Heart left ventricle (tissue), 16 donors: ENCODE measurements at regions of chr20 and their contacts with region 1.

Region 1: DNA sequence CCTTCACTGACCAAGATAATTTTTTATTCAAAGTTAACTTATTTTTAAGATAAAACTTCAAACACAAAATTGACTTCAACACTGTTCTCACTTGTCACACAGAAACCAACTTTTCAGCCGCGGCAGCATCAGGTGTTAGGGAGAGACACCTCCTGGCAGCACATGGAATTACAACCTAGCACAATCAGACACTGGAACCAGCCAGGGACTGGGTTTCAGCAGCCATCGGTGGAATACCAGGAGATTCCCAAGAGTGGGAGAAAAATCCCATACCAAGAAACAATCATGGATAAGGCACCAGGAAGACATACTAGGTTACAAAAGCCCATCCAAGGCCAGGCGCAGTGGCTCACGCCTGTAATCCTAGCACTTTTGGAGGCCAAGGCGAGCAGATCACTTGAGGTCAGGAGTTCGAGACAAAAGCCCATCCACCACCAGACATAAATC is 70.0 kb downstream of the SNX5 start:
- DNase-seq: peak; percentile 70 to 81 (median 78)
- ATAC-seq: peak in 3 of 4 donors; percentile 36 to 60 (median 51)
- H3K4me3 ChIP-seq: no peak overlapping the region
- H3K27ac ChIP-seq: no peak overlapping the region
- H3K4me1 ChIP-seq: peaks cover 0 to 38% (median 31%) of the 10 kb centered on the region in 12 donors
- H3K27me3 ChIP-seq: no peaks in the 10 kb centered on the region
- CTCF ChIP-seq: peak; percentile 88 to 98 (median 92)
- POLR2A ChIP-seq: no peak

Region 2: GRCh38 chr20:17504898-17505635 is 393.5 kb before region 1 on chr20:
- intact Hi-C with region 1: loop called in 9 of 10 experiments (anchors 2 to 10 kb)
- DNase-seq: peak; percentile 54 to 85 (median 58)
- ATAC-seq: peak; percentile 59 to 87 (median 82)
- H3K4me3 ChIP-seq: peak overlapping the region; percentile 24 to 65 (median 54)
- H3K27ac ChIP-seq: peak overlapping the region in 8 of 12 donors; percentile 5 to 65 (median 32)
- H3K4me1 ChIP-seq: peaks cover 0 to 19% (median 5%) of the 10 kb centered on the region in 12 donors
- H3K27me3 ChIP-seq: no peaks in the 10 kb centered on the region
- CTCF ChIP-seq: peak; percentile 47 to 83 (median 72)
- POLR2A ChIP-seq: no peak

Region 3: DNA sequence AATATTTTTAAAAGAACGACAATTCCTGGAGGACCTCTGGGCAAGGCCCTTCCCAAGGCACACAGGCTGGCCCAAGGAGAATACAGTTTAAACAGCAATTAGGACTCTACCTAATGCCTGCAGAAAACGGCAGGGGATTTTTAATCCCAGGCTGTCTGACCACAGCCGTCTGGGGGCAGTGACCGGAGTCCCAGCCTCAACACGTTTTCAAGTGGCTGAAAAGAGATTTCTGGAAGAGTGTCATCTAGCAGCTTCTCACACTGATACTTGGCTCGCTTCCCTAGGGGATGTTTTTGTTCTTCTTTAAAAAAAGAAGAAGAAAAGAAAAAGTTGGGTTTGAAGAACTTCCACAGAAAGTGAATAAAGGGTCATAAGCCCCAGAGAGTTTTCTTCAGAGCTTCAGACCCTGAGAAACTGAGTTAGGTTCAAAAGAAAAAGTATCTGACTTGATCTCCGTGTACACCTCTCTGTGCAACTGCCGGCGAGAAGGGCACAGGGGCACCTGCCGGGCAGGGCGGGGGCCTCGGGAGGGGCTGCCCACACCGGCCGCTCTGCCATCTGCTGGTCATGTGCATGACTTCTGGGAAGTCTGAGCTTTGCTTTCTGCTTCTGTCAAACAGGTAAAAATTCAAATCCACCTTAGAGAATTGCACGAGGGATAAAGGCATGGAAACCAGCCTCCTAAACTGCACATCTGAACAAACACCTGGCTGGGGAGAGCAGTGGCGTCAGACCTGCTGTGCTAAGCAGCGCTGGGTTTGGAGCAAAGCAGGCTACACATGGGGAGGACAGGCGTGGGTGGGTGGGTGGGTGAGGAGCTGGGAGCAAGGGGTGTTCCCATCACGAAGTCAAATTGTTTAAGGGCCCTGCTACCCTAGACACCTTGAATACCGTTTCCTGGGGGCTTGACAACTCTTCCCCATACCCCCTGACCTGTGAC is 249.5 kb before region 1 on chr20:
- intact Hi-C with region 1: loop called in 2 of 10 experiments (anchors 10 kb)
- DNase-seq: peak in 1 of 5 donors; percentile 35
- ATAC-seq: peak in 1 of 4 donors; percentile 52
- H3K4me3 ChIP-seq: no peak overlapping the region
- H3K27ac ChIP-seq: peak overlapping the region in 2 of 12 donors; percentile 33 to 59
- H3K4me1 ChIP-seq: peaks cover 0 to 82% (median 73%) of the 10 kb centered on the region in 12 donors
- H3K27me3 ChIP-seq: no peaks in the 10 kb centered on the region
- CTCF ChIP-seq: peak in 11 of 12 donors; percentile 19 to 59 (median 39)
- POLR2A ChIP-seq: no peak

Region 4: DNA sequence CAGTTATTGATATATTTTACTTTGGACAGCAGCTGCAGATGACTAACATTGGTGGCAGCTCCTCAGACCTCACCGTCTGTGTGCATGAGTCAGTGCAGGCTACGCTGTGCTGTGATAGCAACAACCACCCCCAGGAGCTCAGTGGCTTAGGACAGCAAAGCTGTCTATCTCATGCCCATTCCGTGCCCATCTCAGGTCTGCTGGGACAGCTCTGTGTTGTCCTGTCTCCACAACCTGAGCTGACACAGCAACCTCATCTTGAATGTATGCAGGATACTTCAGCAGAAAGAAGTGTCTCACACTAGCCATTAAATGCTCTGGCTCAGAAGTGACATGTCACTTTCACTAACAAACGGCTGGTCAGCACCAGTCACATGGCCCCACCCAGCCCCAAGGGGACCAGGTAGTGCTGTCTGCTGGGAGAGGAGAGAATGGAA is 151.1 kb before region 1 on chr20:
- intact Hi-C with region 1: loop called in 3 of 10 experiments (anchors 2 to 5 kb)
- DNase-seq: peak in 1 of 5 donors; percentile 64
- ATAC-seq: peak in 3 of 4 donors; percentile 23 to 84 (median 73)
- H3K4me3 ChIP-seq: no peak overlapping the region
- H3K27ac ChIP-seq: no peak overlapping the region
- H3K4me1 ChIP-seq: peaks cover 0 to 19% (median 10%) of the 10 kb centered on the region in 12 donors
- H3K27me3 ChIP-seq: no peaks in the 10 kb centered on the region
- CTCF ChIP-seq: no peak
- POLR2A ChIP-seq: no peak

Region 5: GRCh38 chr20:17835240-17835935 is 63.2 kb before region 1 on chr20:
- intact Hi-C with region 1: loop called in 1 of 10 experiments (anchors 5 kb)
- DNase-seq: peak in 3 of 5 donors; percentile 45 to 76 (median 74)
- ATAC-seq: peak; percentile 44 to 72 (median 64)
- H3K4me3 ChIP-seq: no peak overlapping the region
- H3K27ac ChIP-seq: peak overlapping the region; percentile 36 to 96 (median 81)
- H3K4me1 ChIP-seq: peaks cover 0 to 34% (median 21%) of the 10 kb centered on the region in 12 donors
- H3K27me3 ChIP-seq: no peaks in the 10 kb centered on the region
- CTCF ChIP-seq: no peak
- POLR2A ChIP-seq: no peak